Left ventricle myocardium superior (tissue), 1 donor: ENCODE measurements at regions of chr7 and their contacts with region 1.

Region 1: GRCh38 chr7:15719311-15719710 is 32.8 kb upstream of the MEOX2 start:
- DNase-seq: no peak
- ATAC-seq: no peak

Region 2: GRCh38 chr7:15326044-15326644 is 393.2 kb before region 1 on chr7:
- intact Hi-C with region 1: loop called (anchors 5 kb)
- DNase-seq: no peak
- ATAC-seq: no peak

Region 3: GRCh38 chr7:15686295-15686956 is 32.9 kb before region 1 on chr7 and contains the start of gene MEOX2:
- intact Hi-C with region 1: no loop called
- DNase-seq: peak; percentile 89
- ATAC-seq: peak; percentile 90
- total RNA-seq, gene MEOX2: 11.2 TPM